Breast epithelium (tissue), 4 donors: ENCODE measurements at regions of chr2 and their contacts with region 1.

Region 1: DNA sequence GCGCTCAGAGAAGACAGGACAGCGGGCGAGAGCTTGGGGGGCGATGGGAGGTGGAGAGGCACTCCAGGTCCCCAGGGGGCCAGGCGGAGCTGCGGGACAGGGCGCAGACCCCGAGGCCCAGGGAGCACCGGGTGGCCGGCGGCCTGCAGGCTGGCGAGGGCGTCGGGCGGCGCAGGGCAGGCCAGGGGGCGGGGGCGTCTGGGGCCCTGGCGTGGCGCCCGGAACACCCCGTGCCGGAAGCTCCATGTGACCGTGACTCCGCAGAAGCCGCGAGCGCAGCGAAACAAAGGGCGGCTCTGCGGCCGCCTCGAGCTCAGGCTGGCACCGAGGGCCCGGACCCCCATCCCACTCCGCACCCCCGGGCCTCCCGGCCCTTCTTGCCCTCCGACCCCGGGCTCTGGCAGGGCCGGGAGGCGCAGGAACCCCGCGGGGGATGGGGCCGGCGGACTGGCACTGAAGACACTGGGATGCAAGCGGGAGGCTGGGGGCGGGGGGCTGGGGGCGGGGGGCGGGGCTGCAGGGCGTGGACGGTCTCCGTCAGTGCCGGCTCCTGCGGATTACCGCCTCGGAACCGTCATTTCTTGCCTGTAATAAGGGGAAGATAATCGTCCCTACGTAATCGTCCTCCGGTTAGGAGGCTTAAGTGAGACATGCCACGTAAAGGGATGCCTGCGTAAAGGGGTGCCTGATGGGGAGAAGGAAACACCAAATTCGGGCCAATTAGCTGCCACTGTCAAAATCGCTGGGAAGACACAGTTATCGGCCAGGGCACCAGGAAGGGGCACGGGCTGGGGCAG is 19.2 kb downstream of the SH2D6 start:
- DNase-seq: peak; percentile 82 to 85
- H3K4me3 ChIP-seq: peak overlapping the region; percentile 42 to 66 (median 56)
- H3K27ac ChIP-seq: peak overlapping the region; percentile 96 to 97
- H3K4me1 ChIP-seq: peaks cover 18 to 23% of the 10 kb centered on the region in 2 donors
- H3K27me3 ChIP-seq: no peaks in the 10 kb centered on the region
- CTCF ChIP-seq: no peak
- POLR2A ChIP-seq: peak; percentile 85

Region 2: DNA sequence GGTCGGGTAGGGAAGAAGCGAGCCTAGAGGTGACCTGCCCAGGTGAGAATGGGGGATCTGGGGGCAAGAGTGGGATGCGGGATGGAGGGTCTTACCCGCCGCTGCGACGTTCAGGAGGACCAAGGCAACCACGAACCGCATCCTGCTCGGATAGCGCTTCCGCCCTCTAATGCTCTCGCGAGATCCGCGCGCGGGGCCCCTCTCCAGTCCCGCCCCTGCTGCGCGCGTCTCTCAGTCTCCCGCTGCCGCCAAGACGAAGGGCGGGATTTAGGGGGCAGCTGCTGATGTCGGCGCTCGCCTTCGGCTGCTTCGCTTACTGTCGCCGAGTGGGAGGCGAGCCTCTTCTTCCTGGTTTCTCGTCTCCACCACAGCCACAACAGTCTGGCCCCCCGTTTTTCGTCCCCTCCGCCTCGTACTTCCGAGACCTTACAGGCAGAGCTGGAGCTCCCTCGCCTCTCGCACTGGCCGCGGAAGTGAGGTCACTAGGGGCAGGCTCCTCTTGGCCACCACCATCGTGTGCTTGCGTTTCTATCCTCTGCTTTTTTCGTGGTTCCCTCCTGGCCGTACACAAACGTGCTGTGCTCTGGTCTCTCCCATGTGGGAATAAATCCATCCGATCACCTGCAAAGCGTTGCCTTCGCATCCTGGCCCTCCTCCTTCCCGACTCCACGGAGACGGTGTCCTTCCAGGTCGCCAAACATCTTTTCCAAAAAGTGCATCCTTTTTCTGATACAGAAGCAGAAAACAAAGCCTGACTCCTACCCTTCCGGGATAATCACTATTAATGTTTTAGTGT is 109.7 kb before region 1 on chr2 and contains the start of gene TGOLN2:
- intact Hi-C with region 1: loop called (anchors 5 kb)
- DNase-seq: peak; percentile 89 to 94
- H3K4me3 ChIP-seq: peak within 1 kb of the TSS; percentile 68 to 82 (median 81)
- H3K27ac ChIP-seq: peak within 1 kb of the TSS; percentile 95 to 97
- H3K4me1 ChIP-seq: peaks cover 5 to 19% of the 10 kb centered on the region in 2 donors
- H3K27me3 ChIP-seq: no peaks in the 10 kb centered on the region
- CTCF ChIP-seq: peak in 2 of 3 donors; percentile 10 to 40
- POLR2A ChIP-seq: peak; percentile 99
- total RNA-seq, gene TGOLN2: 111 to 161 (median 117) TPM

Region 3: GRCh38 chr2:85423525-85423924 is 14.2 kb before region 1 on chr2:
- intact Hi-C with region 1: no loop called
- DNase-seq: no peak
- H3K4me3 ChIP-seq: no peak overlapping the region
- H3K27ac ChIP-seq: no peak overlapping the region
- H3K4me1 ChIP-seq: no peaks in the 10 kb centered on the region
- H3K27me3 ChIP-seq: no peaks in the 10 kb centered on the region
- CTCF ChIP-seq: no peak
- POLR2A ChIP-seq: no peak

Region 4: DNA sequence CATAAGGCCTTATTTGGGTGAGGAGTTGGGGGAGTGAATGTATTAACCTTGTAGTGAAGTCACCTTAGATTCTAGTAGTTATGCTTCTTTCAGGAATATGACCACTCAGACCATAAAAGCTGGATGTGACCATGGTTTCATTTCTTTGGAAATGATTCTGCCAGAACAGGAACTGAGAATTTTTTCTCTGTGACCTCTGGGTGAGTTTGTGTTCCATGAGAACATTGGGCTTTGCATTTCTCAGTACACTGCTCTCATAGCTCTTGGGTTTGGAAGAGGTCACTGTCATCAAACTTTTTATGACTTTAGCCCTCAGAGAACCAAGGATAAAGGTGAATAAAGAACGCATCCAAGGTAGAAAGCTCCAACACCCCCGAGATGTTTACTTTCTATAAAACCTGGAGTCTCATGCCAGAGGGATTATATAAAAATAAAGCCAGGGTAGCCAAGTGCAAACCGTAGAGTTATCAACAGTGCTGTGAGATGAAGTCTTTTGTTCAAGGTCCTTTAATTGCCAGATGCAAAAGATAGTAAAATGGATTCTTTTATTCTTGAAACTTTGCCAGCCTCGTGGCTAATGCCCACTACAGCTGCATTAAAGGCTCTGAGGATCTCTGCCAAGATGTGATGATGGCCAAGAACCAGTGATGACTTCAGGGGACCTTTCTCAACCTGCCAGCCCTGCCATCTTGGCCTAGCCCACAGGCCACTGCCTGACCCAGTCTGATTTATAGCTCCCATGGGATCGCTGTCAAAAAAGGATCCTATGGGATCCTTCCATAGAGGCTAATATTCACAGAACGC is 73.5 kb after region 1 on chr2:
- intact Hi-C with region 1: no loop called
- DNase-seq: no peak
- H3K4me3 ChIP-seq: no peak overlapping the region
- H3K27ac ChIP-seq: peak overlapping the region in 1 of 2 donors; percentile 65
- H3K4me1 ChIP-seq: peaks cover 0 to 5% of the 10 kb centered on the region in 2 donors
- H3K27me3 ChIP-seq: no peaks in the 10 kb centered on the region
- CTCF ChIP-seq: no peak
- POLR2A ChIP-seq: no peak

Region 5: DNA sequence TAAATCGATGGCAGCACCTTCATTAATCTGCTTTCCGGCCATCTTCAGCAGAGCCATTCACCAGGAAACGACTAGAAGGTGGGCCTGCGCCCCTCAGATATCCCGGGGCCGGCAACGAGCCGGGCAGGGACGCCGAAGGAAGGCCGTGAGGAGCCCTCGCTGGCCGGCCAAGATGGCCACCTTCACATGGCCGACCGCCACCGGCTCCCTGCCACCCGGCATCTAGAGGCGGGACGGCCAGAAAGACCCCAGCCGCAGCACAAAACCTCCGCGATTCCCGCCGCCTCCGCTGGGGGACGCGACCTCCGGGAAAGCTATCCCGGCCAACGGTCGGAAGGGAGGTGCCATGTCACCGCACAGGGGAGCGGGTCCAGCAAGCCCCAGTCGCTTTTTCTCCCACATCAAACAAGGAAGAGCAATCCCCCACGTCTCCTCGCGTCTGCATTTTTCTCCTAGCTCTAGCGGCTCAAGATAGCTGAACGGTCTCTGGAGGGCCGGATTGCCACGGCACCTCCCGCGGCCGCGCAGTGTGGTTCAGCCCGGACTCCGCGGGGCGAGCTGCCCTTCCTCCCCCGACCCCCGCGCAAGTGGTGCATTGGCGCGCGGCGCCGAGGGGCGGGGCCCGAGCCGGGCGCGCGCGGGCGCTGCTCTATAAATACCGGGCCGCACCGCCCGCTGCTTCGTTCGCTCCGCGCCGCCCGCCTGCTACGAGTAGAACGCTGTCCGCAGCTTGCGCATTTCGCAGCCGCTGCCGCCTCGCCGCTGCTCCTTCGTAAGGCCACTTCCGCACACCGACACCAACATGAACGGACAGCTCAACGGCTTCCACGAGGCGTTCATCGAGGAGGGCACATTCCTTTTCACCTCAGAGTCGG is 101.0 kb after region 1 on chr2 and contains the start of gene MAT2A:
- intact Hi-C with region 1: loop called (anchors 5 kb)
- DNase-seq: peak; percentile 90 to 93
- H3K4me3 ChIP-seq: peak within 1 kb of the TSS; percentile 92 to 97 (median 95)
- H3K27ac ChIP-seq: peak within 1 kb of the TSS; percentile 92 to 99
- H3K4me1 ChIP-seq: peaks cover 0 to 16% of the 10 kb centered on the region in 2 donors
- H3K27me3 ChIP-seq: no peaks in the 10 kb centered on the region
- CTCF ChIP-seq: peak; percentile 87 to 88 (median 88)
- POLR2A ChIP-seq: peak; percentile 98
- total RNA-seq, gene MAT2A: 180 to 263 (median 236) TPM

Region 6: DNA sequence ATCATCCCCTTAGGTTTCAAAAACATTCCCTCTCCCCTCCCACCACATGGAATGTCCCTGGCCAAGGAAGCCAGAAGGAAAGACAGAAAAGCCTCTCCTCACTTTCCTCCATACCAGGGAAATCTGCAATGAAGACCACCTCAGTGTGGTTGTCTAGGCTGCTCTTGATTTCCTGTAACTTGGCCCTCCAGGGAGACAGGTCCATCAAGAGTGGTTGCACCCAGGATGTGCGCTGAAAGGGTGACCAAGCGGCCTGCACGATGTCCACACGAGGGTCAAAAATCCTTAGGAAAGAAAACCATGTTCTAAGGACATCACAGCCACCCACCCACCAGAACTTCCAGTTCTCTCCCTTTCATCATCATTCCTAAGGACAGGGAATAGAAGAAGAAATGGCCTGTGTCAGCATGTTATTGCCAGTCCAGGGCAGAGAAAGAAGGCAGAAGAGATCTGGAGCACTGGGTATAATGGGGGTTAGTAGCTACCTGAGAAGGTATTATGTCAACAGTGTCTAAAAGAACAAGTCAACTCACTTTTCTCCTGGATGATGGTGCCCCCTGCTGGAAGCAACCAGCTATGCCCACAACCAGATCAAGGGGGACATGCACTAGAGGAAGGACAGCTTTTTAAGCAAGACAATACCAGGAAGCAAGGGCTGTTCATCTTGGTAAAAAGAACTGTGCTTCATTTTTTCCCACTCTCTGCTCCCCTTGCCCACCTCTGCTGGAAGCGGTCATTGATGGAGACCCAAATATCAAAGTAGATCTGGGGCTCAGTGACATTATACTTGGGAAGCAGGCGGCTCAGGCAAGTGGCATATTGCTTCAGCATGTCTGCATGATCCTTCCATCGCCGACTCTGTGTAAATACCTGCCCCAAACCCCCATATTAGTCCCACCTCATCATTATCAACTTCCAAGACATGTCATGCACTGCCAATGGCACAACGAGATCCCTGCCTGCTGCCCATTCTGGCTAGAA is 114.3 kb after region 1 on chr2:
- intact Hi-C with region 1: loop called (anchors 5 kb)
- DNase-seq: peak; percentile 84
- H3K4me3 ChIP-seq: no peak overlapping the region
- H3K27ac ChIP-seq: peak overlapping the region; percentile 21 to 75
- H3K4me1 ChIP-seq: no peaks in the 10 kb centered on the region
- H3K27me3 ChIP-seq: no peaks in the 10 kb centered on the region
- CTCF ChIP-seq: peak; percentile 85 to 94 (median 94)
- POLR2A ChIP-seq: no peak